ENCODE measurements at regions of chr3 and their contacts with region 1.

Region 1: GRCh38 chr3:51391075-51391567 is at the start of gene RBM15B:
- DNase-seq: peak; percentile 98
- H3K4me3 Mint-ChIP-seq: peak within 1 kb of the TSS; percentile 81
- H3K27ac Mint-ChIP-seq: peak within 1 kb of the TSS; percentile 85
- H3K4me1 Mint-ChIP-seq: peaks cover 77% of the 10 kb centered on the region
- H3K27me3 Mint-ChIP-seq: no peaks in the 10 kb centered on the region
- total RNA-seq, gene RBM15B: 12.8 to 13.5 TPM

Region 2: GRCh38 chr3:51379301-51379700 is 11.8 kb before region 1 on chr3:
- CTCF ChIA-PET with region 1: interaction called, 19 read pairs
- intact Hi-C with region 1: no loop called
- DNase-seq: no peak
- H3K4me3 Mint-ChIP-seq: no peak overlapping the region
- H3K27ac Mint-ChIP-seq: no peak overlapping the region
- H3K4me1 Mint-ChIP-seq: peaks cover 20% of the 10 kb centered on the region
- H3K27me3 Mint-ChIP-seq: no peaks in the 10 kb centered on the region

Region 3: GRCh38 chr3:51434746-51435327 is 43.7 kb after region 1 on chr3:
- CTCF ChIA-PET with region 1: interaction called, 13 read pairs
- intact Hi-C with region 1: loop called (anchors 1 kb)
- DNase-seq: peak; percentile 59
- H3K4me3 Mint-ChIP-seq: no peak overlapping the region
- H3K27ac Mint-ChIP-seq: no peak overlapping the region
- H3K4me1 Mint-ChIP-seq: peaks cover 3% of the 10 kb centered on the region
- H3K27me3 Mint-ChIP-seq: no peaks in the 10 kb centered on the region

Region 4: GRCh38 chr3:51670823-51671733 is 280.0 kb after region 1 on chr3 and contains the start of gene TEX264:
- CTCF ChIA-PET with region 1: interaction called, 7 read pairs
- intact Hi-C with region 1: loop called (anchors 1 kb)
- DNase-seq: peak; percentile 85
- H3K4me3 Mint-ChIP-seq: peak within 1 kb of the TSS; percentile 85
- H3K27ac Mint-ChIP-seq: peak within 1 kb of the TSS; percentile 66
- H3K4me1 Mint-ChIP-seq: peaks cover 61% of the 10 kb centered on the region
- H3K27me3 Mint-ChIP-seq: no peaks in the 10 kb centered on the region
- total RNA-seq, gene TEX264: 23.7 to 26.6 TPM

Region 5: GRCh38 chr3:51682079-51682478 is 291.0 kb after region 1 on chr3:
- CTCF ChIA-PET with region 1: interaction called, 7 read pairs
- intact Hi-C with region 1: loop called (anchors 1 kb)
- DNase-seq: peak; percentile 87
- H3K4me3 Mint-ChIP-seq: no peak overlapping the region
- H3K27ac Mint-ChIP-seq: peak overlapping the region; percentile 38
- H3K4me1 Mint-ChIP-seq: peaks cover 87% of the 10 kb centered on the region
- H3K27me3 Mint-ChIP-seq: no peaks in the 10 kb centered on the region

Region 6: DNA sequence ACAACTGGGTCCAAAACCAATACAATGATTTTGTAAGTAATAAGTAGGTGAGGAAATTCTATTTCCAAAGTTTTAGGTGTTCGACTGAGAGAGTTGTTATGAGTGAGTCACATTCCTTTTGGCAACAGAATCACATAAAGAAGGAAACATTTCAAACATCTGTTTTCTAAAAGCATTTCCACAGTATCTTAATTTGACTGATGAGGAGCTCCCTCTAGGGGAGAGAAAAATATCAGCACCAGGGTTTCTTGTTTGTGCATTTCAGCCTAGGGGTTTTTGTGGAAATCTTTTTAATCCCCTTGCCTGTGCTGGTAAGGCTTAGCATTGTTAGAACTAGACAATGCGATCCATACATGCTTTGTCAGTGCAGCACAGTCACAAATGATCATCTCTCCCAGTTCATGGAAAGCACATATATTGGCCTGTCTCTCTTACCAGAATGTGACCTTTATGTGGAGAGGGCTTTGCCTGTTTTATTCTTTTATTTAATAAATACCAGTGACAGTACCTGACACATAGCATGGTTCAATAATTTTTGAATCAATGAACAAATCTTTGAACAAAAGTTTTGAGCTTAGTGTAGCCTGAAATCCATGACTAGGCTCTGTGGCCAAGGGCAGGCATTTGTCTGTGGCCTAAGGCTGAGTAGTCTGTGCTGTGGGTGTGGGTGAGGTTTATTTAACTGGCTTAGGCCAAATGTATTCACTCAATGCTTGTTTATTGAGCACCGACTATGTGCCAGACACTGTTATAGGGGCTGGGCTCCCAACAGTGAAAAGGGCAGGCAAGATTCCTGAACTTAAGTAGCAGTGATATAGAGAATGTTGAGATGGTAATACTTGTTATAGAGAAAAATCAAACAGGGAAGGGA is 409.0 kb after region 1 on chr3:
- CTCF ChIA-PET with region 1: no interaction called
- intact Hi-C with region 1: loop called (anchors 1 kb)
- DNase-seq: peak; percentile 35
- H3K4me3 Mint-ChIP-seq: no peak overlapping the region
- H3K27ac Mint-ChIP-seq: no peak overlapping the region
- H3K4me1 Mint-ChIP-seq: peaks cover 22% of the 10 kb centered on the region
- H3K27me3 Mint-ChIP-seq: peaks cover 5% of the 10 kb centered on the region

Region 7: DNA sequence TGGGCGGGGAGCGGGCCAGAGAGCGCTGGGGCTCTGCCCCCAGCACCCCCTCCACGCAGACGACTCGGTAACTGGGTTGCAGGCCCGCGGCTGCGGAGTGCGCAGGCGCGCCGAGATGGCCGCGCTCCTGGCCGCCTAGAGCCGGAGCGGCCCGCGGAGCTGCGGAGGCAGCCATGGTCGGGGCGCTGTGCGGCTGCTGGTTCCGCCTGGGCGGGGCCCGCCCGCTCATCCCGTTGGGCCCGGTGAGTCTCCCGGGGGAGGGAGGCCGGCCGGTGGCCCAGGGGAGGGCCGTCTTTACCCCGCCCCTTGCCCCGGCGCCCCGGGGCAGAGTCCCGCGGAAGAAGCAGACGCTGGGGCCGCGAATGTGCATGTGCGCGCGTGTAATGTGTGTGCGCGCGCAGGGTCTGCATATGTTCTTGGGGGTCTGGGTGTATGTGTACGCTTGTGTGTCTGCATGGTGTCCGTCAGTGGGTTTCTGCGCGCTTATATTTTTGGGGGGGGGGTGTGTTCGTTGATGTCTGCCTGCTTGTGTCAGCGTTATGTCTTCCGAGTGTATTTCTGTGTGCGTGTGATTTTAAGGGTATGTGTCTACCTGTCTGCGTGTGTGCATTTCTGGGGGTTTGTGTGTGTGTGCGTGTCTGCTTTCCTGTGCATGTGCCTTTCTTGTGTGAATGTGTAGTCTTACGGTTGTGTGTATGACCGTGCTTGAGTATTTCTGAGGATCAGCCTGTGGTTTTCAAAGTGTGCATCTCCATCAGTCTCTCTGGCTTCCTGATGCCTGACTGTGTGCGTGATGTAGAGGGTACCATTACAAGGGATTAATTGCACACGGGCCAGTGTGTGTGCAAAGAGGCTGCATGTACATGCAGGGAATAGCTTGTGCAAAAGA is 584.1 kb after region 1 on chr3 and contains the start of gene ABHD14A:
- CTCF ChIA-PET with region 1: no interaction called
- intact Hi-C with region 1: loop called (anchors 10 kb)
- DNase-seq: peak; percentile 70
- H3K4me3 Mint-ChIP-seq: peak within 1 kb of the TSS; percentile 99
- H3K27ac Mint-ChIP-seq: peak within 1 kb of the TSS; percentile 97
- H3K4me1 Mint-ChIP-seq: peaks cover 37% of the 10 kb centered on the region
- H3K27me3 Mint-ChIP-seq: no peaks in the 10 kb centered on the region
- total RNA-seq, gene ABHD14A: 5.4 to 5.7 TPM

Measured in activated naive CD4-positive, alpha-beta T cell treated with anti-CD3 and anti-CD28 coated beads for 36 hours (primary cell).